ENCODE measurements at regions of chr16 and their contacts with region 1.

Region 1: DNA sequence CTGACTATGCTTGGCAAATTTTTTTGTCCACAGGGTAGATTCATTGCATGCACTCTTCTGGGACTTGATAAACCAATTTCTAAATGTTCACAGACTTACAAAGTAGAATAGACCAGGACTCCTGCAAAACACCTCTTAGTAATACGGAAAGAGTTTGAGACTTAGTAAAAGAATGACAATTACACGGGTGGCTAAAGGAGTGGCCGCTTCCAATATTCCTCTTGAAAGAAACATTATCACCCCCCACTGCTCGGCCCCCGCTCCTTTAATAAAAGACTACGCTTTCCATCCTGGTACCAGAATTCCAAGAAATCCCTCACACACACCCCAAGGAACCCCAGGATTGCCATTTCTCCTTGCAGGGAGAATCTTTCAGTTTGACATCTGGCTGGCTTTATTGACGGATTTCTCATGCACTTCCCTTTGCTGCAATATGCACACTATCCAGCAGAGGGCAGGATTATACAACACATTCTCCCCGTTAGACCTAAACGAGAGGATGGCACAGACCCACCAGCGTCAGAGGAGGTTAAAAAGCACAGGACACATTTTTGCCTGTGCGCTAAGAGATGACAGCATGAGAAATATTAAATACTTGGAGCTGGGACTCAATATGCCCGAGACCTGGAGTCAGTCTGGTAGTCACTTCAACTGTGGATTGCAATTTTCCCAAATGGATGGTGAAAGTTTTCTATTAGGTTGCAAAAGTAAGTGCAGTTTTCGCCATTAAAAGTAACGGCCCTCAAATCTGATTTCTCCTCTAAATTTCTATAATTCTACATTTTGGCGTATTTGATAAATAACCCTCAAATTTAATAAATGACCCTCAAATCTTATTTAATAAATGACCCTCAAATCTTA is 46.6 kb upstream of the NUDT7 start:
- DNase-seq: peak in 4 of 6 donors; percentile 31 to 78 (median 34)
- ATAC-seq: peak; percentile 77 to 96 (median 90)
- H3K4me3 ChIP-seq: no peak overlapping the region
- H3K27ac ChIP-seq: no peak overlapping the region
- H3K4me1 ChIP-seq: no peaks in the 10 kb centered on the region
- H3K27me3 ChIP-seq: peaks cover 0 to 7% (median 0%) of the 10 kb centered on the region in 4 donors
- CTCF ChIP-seq: peak; percentile 65 to 79 (median 74)

Region 2: DNA sequence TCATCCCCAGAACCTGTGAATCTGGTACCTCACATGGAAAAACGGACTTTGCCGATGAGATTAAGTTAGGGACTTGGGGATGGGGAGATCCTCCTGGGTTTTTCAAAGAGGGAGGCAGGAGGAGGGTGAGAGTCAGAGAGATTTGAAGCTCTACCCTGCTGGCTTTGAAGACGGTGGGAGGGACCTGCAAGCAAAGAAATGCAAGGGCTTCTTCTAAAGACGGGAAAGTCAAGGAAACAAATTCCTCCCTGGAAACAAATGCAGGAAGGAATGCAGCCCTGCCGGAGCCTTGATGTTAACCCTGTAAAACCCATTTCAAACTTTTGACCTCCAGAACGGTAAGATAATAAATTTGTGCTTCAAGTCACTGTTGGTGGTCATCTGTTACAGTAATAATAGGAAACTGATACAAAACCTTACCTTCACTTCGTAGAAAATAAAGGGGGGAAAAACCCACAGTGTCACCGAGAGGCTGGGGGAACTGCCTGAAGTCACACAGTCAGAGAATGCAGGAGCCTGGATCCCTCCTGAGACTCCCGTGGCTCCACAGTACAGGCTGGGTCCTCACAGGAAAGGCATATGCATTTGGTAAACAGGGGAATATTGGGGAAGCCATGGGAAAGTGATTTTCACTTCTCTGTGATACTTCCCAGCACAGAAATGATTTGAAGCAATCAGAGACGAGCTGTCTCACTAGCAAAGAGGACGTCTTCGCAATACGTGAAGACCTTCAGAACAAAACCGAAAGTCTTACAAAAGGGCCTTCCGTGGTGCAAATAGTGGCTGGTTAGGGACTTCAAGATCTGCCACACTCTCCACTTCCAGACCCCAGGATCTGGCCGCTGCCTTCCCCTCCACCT is 287.7 kb after region 1 on chr16:
- intact Hi-C with region 1: loop called in 1 of 3 experiments (anchors 10 kb)
- DNase-seq: no peak
- ATAC-seq: no peak
- H3K4me3 ChIP-seq: no peak overlapping the region
- H3K27ac ChIP-seq: no peak overlapping the region
- H3K4me1 ChIP-seq: no peaks in the 10 kb centered on the region
- H3K27me3 ChIP-seq: peaks cover 0 to 6% (median 0%) of the 10 kb centered on the region in 4 donors
- CTCF ChIP-seq: no peak

Region 3: DNA sequence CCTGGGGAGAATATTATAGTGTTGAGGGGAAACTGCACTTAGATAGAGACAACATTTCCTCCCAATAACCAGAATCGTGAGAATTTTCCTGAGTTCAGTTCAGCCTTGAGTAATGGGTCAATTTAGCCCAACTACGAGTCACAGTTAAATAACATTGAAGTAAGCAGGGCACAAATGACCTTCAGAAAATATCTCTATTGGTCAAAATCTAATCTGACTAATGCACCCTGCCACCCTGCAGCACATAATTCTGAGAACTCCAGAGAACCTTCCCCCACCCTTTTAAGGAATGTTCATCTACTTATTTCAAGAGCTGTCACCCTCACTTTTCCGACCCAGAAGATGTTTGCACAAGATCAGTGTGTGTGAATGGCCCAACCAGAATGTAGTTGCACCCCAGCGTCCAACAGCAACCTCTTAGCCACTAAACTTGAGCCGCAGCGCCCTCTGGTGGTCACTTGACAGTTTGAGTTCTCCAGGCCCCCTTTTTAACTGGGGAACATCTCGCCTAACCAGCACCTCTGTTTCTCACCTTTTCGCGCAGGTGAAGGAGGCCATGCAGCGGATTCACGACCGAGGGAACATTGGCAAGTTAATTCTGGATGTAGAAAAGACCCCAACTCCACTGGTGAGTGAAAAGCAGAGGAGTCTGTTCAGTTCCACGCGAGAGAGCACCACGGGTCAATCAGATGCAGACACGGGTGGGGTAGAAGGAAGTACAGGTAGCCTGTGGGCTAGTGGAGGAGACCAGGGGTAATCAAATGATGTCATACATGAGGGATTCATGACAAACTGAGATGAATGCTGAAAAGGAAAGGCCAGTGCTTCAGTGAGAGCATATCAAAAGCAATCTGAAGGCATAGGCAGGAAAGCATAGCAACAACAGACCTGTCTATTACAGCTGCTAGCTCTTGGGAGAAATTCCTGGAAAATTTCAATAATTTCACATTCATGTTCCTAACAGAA is 295.9 kb after region 1 on chr16:
- intact Hi-C with region 1: loop called (anchors 2 to 10 kb)
- DNase-seq: peak; percentile 54 to 96 (median 82)
- ATAC-seq: peak; percentile 78 to 94 (median 92)
- H3K4me3 ChIP-seq: no peak overlapping the region
- H3K27ac ChIP-seq: no peak overlapping the region
- H3K4me1 ChIP-seq: no peaks in the 10 kb centered on the region
- H3K27me3 ChIP-seq: peaks cover 0 to 6% (median 0%) of the 10 kb centered on the region in 4 donors
- CTCF ChIP-seq: peak; percentile 52 to 79 (median 70)

Measured in pancreas (tissue), 10 donors.